HepG2 (cell line): ENCODE measurements at regions of chr2 and their contacts with region 1.

Region 1: DNA sequence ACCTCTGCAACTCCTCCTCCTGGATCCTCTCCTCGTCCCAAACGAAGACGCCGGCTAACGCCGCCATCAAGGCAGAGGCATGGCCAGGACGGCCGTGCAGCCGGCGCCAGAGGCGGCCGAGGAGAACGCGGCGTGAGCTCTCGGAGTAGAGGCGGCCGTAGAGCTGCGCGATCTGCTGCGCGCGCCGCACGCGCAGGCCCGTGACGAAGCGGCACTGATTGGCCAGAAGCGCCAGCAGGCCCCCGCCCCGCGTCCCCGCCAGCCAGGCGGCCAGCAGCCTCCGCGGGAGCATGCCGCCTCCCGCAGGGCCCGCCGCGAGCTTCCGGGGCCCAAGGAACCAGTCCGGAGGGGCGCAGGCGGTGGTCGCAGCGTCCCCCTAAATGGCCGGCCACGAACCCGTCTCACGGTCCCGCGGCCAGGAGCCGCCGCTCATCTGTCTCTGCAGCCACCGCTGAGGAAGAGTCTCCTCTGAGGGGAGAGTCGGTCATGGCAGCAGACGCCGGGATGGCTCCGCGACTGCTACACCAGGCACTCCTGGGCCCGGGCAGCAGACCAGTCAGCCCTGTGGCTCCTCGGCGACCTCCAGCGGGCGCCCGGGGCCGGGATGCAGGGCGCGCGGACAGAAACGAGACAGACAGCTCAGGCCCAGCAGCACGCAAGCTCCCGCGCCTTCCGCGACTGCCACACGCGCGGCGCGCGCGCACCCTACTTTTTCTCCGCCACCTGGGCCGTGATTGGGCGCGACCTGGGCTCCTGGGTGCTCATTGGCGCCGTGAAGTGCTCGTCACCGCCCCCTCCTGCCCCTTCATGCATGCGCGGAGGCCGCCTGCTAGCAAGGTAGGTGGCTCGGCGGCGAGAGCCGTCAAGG is at the start of gene STARD7:
- DNase-seq: peak; percentile 97
- ATAC-seq: peak; percentile 95
- H3K4me3 ChIP-seq: peak within 1 kb of the TSS; percentile 84 to 96 (median 91)
- H3K27ac ChIP-seq: peak within 1 kb of the TSS; percentile 99
- H3K4me1 ChIP-seq: peaks cover 63% of the 10 kb centered on the region
- H3K27me3 ChIP-seq: no peaks in the 10 kb centered on the region; a peak in 1 of 5 replicates
- CTCF ChIP-seq: peak; percentile 54; the same call in 1 of the 2 replicates
- EP300 ChIP-seq: no peak
- POLR2A ChIP-seq: peak; percentile 98
- RAD21 ChIP-seq: peak; percentile 72
- total RNA-seq, gene STARD7: 300 and 332 TPM in 2 replicates

Region 2: GRCh38 chr2:95374921-95375471 is 833.4 kb before region 1 on chr2:
- CTCF ChIA-PET with region 1: no interaction called
- POLR2A ChIA-PET with region 1: no interaction called
- in situ Hi-C with region 1: no loop called
- intact Hi-C with region 1: no loop called
- DNase-seq: no peak
- ATAC-seq: no peak
- H3K4me3 ChIP-seq: no peak overlapping the region
- H3K27ac ChIP-seq: no peak overlapping the region
- H3K4me1 ChIP-seq: no peaks in the 10 kb centered on the region
- H3K27me3 ChIP-seq: peaks cover 0 to 47% of the 10 kb centered on the region in 2 experiments; a peak in 4 of 5 replicates
- CTCF ChIP-seq: no peak
- EP300 ChIP-seq: no peak
- POLR2A ChIP-seq: no peak
- RAD21 ChIP-seq: no peak

Region 3: DNA sequence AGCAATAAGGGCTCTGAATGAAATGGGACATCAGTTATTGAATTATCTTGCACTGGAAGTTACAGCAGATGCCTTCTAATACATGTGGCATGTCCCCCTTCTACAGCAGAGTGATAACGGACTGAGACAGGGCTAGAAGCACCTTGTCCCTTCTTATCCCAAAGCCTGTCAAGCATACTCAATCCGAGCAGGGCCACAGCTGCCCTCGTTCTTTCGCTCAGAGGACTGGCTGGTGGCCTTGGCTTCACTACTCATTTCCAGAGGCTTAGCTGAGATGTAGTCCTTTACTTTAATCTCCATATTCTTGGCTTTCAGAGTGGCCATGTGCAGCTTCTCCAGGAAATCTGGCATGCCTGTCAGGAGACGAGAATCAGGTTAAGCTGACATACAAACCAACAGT is 21.8 kb before region 1 on chr2:
- CTCF ChIA-PET with region 1: no interaction called
- POLR2A ChIA-PET with region 1: interaction called, 10 read pairs
- in situ Hi-C with region 1: no loop called
- intact Hi-C with region 1: no loop called
- DNase-seq: no peak
- ATAC-seq: no peak
- H3K4me3 ChIP-seq: no peak overlapping the region
- H3K27ac ChIP-seq: peak overlapping the region; percentile 48
- H3K4me1 ChIP-seq: peaks cover 28% of the 10 kb centered on the region
- H3K27me3 ChIP-seq: no peaks in the 10 kb centered on the region
- CTCF ChIP-seq: no peak
- EP300 ChIP-seq: no peak
- POLR2A ChIP-seq: no peak
- RAD21 ChIP-seq: no peak

Region 4: DNA sequence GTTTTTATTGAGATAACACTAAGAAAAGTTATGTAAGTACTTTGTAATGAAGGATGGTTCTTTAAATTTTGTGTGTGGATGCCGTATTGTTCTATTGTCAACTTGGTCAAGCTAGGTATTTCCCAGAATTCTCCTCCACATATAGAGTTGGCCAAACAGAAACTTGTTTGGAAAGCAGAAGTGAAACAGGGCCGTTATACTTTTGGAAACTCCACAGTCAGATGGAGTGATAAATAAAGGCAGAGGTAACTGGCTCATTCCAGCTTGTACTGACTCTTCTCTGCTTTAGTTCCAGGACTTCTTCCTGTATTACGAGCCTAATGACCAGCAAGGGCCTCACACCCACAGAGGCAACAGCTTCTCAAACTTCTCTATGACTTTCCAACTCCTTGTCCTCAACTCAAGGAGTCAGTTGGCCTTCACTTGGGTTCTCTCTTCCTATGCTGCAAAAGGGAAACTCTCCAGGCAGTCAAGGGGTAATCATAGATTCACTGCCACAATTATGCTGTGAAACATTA is 16.7 kb after region 1 on chr2:
- CTCF ChIA-PET with region 1: no interaction called
- POLR2A ChIA-PET with region 1: interaction called, 13 read pairs
- in situ Hi-C with region 1: no loop called
- intact Hi-C with region 1: no loop called
- DNase-seq: no peak
- ATAC-seq: no peak
- H3K4me3 ChIP-seq: no peak overlapping the region
- H3K27ac ChIP-seq: no peak overlapping the region
- H3K4me1 ChIP-seq: 0 out of 2 replicates have a peak, but pooled peaks cover 9% of the 10 kb centered on the region
- H3K27me3 ChIP-seq: no peaks in the 10 kb centered on the region
- CTCF ChIP-seq: no peak
- EP300 ChIP-seq: no peak
- POLR2A ChIP-seq: no peak
- RAD21 ChIP-seq: no peak

Region 5: DNA sequence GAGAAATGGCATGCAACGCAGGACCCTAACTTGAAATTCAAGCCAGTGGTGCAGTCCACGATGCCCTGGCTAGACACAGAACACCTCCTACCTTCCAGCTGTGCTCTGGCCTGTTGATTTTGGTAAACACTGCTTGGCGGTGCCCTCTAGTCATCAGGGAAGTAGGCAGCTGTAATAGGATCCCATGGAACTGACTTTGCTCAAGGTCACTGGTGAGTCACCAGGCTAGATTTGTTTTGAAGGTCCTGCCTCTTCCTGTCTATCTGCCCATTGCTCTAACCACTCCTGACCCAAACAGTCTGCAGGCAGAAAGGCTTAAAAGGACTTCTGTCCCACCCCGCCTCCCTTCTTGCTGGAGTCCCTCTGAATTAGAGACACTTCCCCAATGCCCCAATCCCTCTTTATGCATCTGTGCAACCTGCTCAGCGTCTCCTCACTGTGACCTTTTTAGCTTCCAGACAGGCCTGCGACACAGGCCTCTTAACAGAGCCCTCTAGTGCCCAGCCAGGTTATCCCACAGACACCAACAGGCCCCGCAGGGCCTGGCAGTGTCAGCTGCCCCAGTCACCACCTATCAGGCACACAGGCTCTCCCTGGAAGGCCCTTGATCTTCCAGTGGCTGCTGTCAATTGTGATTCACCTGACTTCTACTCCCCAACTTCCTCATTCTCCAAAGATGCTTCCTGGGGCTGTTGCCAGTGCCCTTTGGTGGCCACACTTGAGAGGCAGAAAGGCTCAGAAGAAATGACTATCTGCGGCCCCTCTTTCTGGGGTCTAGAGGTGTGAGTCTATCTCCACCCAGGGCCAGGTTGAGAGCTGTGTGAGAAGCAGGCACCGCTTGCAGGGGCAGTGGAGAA is 52.3 kb after region 1 on chr2:
- CTCF ChIA-PET with region 1: interaction called, 3 read pairs
- POLR2A ChIA-PET with region 1: interaction called, 91 read pairs
- in situ Hi-C with region 1: loop called (anchors 5 kb)
- intact Hi-C with region 1: loop called (anchors 1 kb)
- DNase-seq: peak; percentile 100
- ATAC-seq: peak; percentile 90
- H3K4me3 ChIP-seq: peak overlapping the region; percentile 19 to 68 (median 31)
- H3K27ac ChIP-seq: peak overlapping the region; percentile 92
- H3K4me1 ChIP-seq: peaks cover 74% of the 10 kb centered on the region
- H3K27me3 ChIP-seq: no peaks in the 10 kb centered on the region
- CTCF ChIP-seq: peak; percentile 67
- EP300 ChIP-seq: peak; percentile 73 to 92
- POLR2A ChIP-seq: peak in 1 of 2 experiments; percentile 71; a peak in 2 of 4 replicates
- RAD21 ChIP-seq: peak; percentile 61

Region 6: GRCh38 chr2:96305091-96305978 is 97.0 kb after region 1 on chr2 and contains the start of gene SNRNP200:
- CTCF ChIA-PET with region 1: no interaction called
- POLR2A ChIA-PET with region 1: interaction called, 14 read pairs
- in situ Hi-C with region 1: no loop called
- intact Hi-C with region 1: no loop called
- DNase-seq: peak; percentile 86
- ATAC-seq: peak; percentile 98
- H3K4me3 ChIP-seq: peak within 1 kb of the TSS; percentile 79 to 92 (median 91)
- H3K27ac ChIP-seq: peak within 1 kb of the TSS; percentile 75
- H3K4me1 ChIP-seq: peaks cover 37% of the 10 kb centered on the region
- H3K27me3 ChIP-seq: no peaks in the 10 kb centered on the region; a peak in 1 of 5 replicates
- CTCF ChIP-seq: peak; percentile 31
- EP300 ChIP-seq: no peak
- POLR2A ChIP-seq: peak; percentile 88 to 95
- RAD21 ChIP-seq: peak; percentile 37; the same call in 1 of the 2 replicates
- total RNA-seq, gene SNRNP200: 99.0 and 163 TPM in 2 replicates

Region 7: DNA sequence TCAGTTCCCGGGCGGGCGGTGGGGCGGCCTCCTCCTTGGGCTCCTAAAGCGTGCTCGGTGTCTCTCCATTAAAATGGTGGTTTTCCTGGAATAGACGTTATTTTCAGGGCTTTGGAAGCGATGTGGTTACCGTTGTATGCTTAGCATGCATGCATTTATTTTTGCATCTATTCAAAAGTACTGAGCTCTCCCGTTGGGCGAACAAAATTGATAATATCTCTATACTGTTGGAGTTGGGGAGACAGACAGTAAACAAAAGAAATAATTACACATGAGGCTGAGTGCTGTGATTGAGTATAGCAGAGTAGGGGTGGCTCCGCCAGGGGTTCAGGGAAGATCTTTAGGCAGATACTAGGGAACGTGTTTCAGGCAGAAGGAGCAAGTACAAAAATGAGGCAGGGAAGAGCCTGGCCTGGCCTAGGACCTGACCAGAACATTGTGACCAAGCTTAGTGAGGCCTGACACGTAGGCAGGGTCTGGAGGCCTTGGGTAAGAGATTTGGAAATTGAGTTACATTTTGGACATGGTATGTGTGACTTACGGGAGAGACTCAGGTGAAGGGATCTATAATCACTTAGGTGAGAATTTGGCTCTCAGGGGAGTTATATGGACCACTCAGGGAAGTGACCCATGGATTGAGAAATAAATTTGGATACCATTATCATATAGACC is 127.9 kb after region 1 on chr2:
- CTCF ChIA-PET with region 1: no interaction called
- POLR2A ChIA-PET with region 1: interaction called, 22 read pairs
- in situ Hi-C with region 1: no loop called
- intact Hi-C with region 1: no loop called
- DNase-seq: no peak
- ATAC-seq: peak; percentile 28
- H3K4me3 ChIP-seq: peak overlapping the region; percentile 74 to 85 (median 81)
- H3K27ac ChIP-seq: peak overlapping the region; percentile 84
- H3K4me1 ChIP-seq: peaks cover 32% of the 10 kb centered on the region
- H3K27me3 ChIP-seq: no peaks in the 10 kb centered on the region; a peak in 1 of 5 replicates
- CTCF ChIP-seq: no peak
- EP300 ChIP-seq: no peak
- POLR2A ChIP-seq: peak; percentile 25 to 73
- RAD21 ChIP-seq: no peak